Heart left ventricle (tissue), 16 donors: ENCODE measurements at regions of chrX and their contacts with region 1.

Region 1: DNA sequence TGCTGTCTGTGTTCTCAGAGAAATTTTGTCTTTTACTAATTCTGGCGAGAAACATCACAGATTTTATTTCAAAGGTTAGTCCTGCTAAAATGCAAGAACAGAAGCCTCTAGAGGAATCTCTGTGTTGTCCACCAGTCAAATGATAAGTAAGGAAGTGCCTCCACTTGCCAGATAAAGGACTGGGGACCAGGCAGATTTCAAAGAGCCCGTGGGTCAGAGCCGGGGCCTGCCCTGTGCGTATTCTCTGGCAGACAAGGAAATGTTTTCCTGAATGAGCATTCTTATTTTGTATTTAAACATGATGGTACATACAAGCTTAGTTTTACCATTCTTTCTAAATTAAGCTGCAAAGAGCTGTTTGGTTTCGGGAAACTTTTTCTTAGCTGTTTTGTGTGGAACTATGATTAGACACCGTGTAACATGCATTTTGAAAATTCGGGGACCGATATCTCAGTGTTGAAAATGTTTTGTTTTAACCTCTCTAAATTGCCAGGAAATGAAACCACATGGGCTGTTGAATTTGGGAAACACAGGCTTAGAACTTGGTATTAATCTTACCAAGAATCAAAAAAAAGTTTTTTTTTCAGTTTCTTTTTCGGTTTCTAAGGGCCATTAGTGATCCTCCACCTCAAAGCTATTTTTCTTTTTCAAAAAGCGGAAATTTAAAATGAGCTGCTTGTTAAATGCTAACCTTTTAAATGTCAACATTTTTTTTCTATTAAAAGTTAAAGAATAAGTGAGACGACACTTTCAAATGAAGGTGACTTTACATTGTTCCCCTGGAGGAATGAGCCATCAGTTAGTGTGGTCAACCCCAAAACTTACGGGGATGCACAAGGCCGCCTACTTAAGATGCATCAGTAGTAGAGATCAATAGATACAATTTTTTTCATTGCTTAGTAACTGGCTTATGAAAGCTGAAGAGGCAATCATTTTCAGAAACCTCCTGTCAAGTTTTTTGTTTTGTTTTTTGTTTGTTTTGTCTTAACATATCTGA is 89.6 kb upstream of the MTM1 start:
- DNase-seq: no peak
- ATAC-seq: no peak
- H3K4me3 ChIP-seq: peak overlapping the region in 2 of 12 donors; percentile 10 to 33
- H3K27ac ChIP-seq: peak overlapping the region in 1 of 12 donors; percentile 60
- H3K4me1 ChIP-seq: peaks cover 0 to 14% (median 0%) of the 10 kb centered on the region in 12 donors
- H3K27me3 ChIP-seq: peaks cover 0 to 4% (median 0%) of the 10 kb centered on the region in 9 donors
- CTCF ChIP-seq: no peak
- POLR2A ChIP-seq: no peak

Region 2: GRCh38 chrX:150200820-150201287 is 277.9 kb before region 1 on chrX:
- intact Hi-C with region 1: loop called in 1 of 10 experiments (anchors 10 kb)
- DNase-seq: peak in 2 of 5 donors; percentile 67 to 79
- ATAC-seq: peak in 3 of 4 donors; percentile 71 to 94 (median 81)
- H3K4me3 ChIP-seq: no peak overlapping the region
- H3K27ac ChIP-seq: no peak overlapping the region
- H3K4me1 ChIP-seq: peaks cover 0 to 4% (median 0%) of the 10 kb centered on the region in 12 donors
- H3K27me3 ChIP-seq: peaks cover 0 to 3% (median 0%) of the 10 kb centered on the region in 9 donors
- CTCF ChIP-seq: no peak
- POLR2A ChIP-seq: no peak

Region 3: GRCh38 chrX:150372280-150372679 is 106.5 kb before region 1 on chrX:
- intact Hi-C with region 1: loop called in 3 of 10 experiments (anchors 10 kb)
- DNase-seq: no peak
- ATAC-seq: peak in 1 of 4 donors; percentile 37
- H3K4me3 ChIP-seq: no peak overlapping the region
- H3K27ac ChIP-seq: peak overlapping the region in 1 of 12 donors; percentile 58
- H3K4me1 ChIP-seq: peaks cover 0 to 5% (median 0%) of the 10 kb centered on the region in 12 donors
- H3K27me3 ChIP-seq: no peaks in the 10 kb centered on the region
- CTCF ChIP-seq: no peak
- POLR2A ChIP-seq: no peak